GM12878 (cell line): ENCODE measurements at regions of chr7 and their contacts with region 1.

Region 1: DNA sequence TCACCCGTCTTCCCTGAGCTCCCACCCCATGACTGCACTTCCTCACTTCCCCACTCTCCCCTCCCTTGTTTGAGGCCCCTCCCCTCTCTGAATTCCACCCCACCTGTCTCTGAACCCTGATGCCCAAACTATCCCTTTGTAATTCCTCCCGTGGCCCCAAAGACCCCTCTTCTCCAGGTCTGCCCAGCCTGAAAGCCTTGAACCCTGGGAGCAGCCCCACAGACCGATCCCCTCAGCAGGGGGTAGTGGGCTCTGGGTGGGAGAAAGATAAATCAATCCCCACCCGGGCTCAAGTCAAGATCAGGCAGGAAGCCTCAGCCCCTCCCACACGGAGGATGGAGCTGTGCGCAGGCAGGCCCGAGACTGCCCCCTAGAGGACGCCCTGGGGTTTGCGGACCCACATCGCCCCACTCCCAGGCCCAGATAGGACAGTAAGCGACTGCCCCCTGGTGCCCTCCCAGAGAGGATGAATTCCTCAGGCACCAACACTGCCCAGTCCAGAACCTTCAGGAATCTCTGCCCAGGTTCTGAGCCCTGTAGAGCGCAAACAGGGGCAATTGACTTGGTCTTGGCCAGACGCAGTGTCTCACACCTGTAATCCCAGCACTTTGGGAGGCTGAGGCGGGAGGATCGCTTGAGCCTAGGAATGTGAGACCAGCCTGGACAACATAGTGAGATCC is 11.7 kb downstream of the HSPB1 start:
- DNase-seq: peak; percentile 71
- ATAC-seq: peak; percentile 58
- H3K4me3 ChIP-seq: no peak overlapping the region
- H3K27ac ChIP-seq: no peak overlapping the region; the same call in 1 of the 2 replicates
- H3K4me1 ChIP-seq: peaks cover 5% of the 10 kb centered on the region
- H3K27me3 ChIP-seq: no peaks in the 10 kb centered on the region
- CTCF ChIP-seq: peak; percentile 100; a peak in 5 of 6 replicates
- EP300 ChIP-seq: 0 out of 4 replicates have a peak, but pooled peaks of 1 of the 2 experiments have one; percentile 27
- POLR2A ChIP-seq: no peak
- RAD21 ChIP-seq: peak; percentile 99

Region 2: GRCh38 chr7:76077435-76077834 is 236.7 kb before region 1 on chr7:
- CTCF ChIA-PET with region 1: no interaction called
- POLR2A ChIA-PET with region 1: no interaction called
- RAD21 ChIA-PET with region 1: no interaction called
- SMC1A ChIA-PET with region 1: no interaction called
- in situ Hi-C with region 1: no loop called
- intact Hi-C with region 1: no loop called
- DNase-seq: no peak
- ATAC-seq: no peak
- H3K4me3 ChIP-seq: no peak overlapping the region
- H3K27ac ChIP-seq: no peak overlapping the region
- H3K4me1 ChIP-seq: no peaks in the 10 kb centered on the region
- H3K27me3 ChIP-seq: no peaks in the 10 kb centered on the region
- CTCF ChIP-seq: no peak
- EP300 ChIP-seq: no peak
- POLR2A ChIP-seq: no peak
- RAD21 ChIP-seq: no peak

Region 3: DNA sequence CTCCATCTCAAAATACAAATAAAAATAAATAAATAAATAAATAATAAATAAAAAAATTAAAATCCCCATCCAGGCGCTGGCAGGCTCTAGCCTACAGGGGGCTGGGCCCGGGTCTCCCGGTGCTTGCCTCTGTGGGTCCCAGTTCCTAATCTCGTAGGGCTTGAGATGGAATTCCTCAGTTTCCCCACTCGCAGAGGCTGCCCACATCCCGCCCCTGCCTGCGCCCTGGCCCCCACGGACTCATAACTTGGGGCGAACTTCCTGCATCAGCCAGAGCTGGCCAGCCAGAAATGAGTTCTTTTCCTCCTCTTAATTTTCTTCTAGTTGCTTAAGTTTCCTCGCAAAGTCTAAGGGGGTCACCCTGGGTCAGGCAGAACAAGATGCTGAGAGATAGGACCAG is 134.5 kb before region 1 on chr7:
- CTCF ChIA-PET with region 1: interaction called, 53 read pairs
- POLR2A ChIA-PET with region 1: no interaction called
- RAD21 ChIA-PET with region 1: interaction called, 18 read pairs
- SMC1A ChIA-PET with region 1: interaction called, 13 read pairs
- in situ Hi-C with region 1: loop called (anchors 5 kb)
- intact Hi-C with region 1: loop called (anchors 1 kb)
- DNase-seq: no peak
- ATAC-seq: no peak
- H3K4me3 ChIP-seq: no peak overlapping the region
- H3K27ac ChIP-seq: no peak overlapping the region
- H3K4me1 ChIP-seq: no peaks in the 10 kb centered on the region
- H3K27me3 ChIP-seq: no peaks in the 10 kb centered on the region
- CTCF ChIP-seq: no peak
- EP300 ChIP-seq: no peak
- POLR2A ChIP-seq: no peak
- RAD21 ChIP-seq: no peak

Region 4: DNA sequence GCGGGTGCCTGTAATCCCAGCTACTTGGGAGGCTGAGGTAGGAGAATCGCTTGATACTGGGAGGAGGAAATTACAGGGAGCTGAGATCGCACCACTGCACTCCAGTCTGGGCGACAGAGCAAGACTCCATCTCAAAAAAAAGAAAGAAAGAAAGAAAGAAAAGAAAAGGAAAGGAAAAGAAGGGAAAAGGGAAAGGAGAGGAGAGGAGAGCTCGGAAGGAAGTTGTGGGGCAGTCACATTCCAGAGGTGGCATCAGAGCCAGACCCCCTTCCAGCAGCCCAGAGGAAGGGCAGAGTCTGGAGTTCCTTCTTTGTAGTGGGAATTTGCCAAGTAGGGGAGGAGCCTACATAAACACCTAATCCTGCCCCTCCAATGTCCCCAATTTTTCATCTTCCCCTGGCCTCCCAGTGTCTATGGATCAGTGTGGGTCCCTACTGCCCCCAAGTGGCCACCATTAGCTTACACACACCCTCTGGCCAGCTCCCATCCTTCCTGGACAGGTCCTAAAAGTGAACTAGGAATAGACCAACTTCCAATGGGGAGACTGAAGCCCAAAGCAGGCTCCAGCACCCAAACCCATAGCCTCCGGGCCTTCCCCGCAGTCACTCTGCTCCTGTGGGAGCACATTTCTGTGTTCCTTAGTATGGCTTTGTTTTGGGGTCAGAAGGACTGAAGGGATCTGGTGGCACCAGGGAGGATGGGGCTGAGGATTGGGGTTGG is 51.3 kb before region 1 on chr7:
- CTCF ChIA-PET with region 1: interaction called, 16 read pairs
- POLR2A ChIA-PET with region 1: interaction called, 3 read pairs
- RAD21 ChIA-PET with region 1: interaction called, 4 read pairs
- SMC1A ChIA-PET with region 1: no interaction called
- in situ Hi-C with region 1: no loop called
- intact Hi-C with region 1: no loop called
- DNase-seq: no peak
- ATAC-seq: peak; percentile 85
- H3K4me3 ChIP-seq: no peak overlapping the region
- H3K27ac ChIP-seq: no peak overlapping the region
- H3K4me1 ChIP-seq: peaks cover 3% of the 10 kb centered on the region
- H3K27me3 ChIP-seq: no peaks in the 10 kb centered on the region; a peak in 1 of 4 replicates
- CTCF ChIP-seq: peak; percentile 76 to 79 (median 78)
- EP300 ChIP-seq: no peak
- POLR2A ChIP-seq: no peak
- RAD21 ChIP-seq: peak; percentile 73

Region 5: DNA sequence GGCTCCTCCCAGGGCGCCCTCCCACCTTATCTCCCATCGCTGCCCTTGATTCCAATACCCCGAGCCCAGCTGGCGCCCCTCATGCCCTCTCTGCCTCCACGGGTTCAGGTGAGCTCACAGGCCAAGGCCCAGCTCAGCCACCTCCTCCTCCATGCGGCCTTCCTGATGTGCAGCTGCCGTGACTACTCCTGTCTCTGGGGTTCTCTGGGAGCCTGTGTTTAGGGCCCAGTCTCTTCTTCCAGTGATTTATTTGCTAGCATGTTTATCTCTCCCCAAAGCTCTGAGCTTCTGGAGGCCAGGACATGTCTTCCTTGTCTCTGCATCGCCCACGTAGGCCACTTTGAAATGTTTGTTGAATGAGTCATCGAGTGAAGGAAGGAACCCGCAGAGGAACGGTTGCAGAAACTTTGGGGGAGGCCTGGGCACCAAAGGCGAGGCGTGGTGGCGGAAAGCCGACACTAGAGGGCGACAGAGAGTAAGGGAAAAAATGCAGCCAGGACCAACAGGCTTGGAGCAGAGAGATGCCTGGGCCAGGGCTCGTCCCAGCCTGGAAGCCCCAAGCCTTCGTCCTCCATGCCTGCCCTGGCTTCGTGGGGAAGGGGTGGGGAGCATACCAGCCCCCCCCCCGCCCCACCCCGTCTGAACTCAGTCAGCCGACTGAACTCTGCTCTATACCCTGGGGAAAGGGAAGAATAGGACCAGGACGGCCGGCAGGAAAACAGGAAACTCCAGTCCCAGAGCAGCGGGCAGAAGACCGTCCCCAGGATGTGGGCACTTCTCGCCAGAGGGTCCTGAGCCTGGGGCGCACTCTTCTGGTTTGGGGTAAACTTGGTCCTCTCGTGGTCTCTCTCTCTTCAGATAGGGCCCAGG is 22.6 kb before region 1 on chr7:
- CTCF ChIA-PET with region 1: interaction called, 229 read pairs
- POLR2A ChIA-PET with region 1: interaction called, 12 read pairs
- RAD21 ChIA-PET with region 1: interaction called, 86 read pairs
- SMC1A ChIA-PET with region 1: interaction called, 34 read pairs
- in situ Hi-C with region 1: no loop called
- intact Hi-C with region 1: loop called (anchors 1 kb)
- DNase-seq: peak; percentile 77
- ATAC-seq: peak; percentile 93
- H3K4me3 ChIP-seq: no peak overlapping the region
- H3K27ac ChIP-seq: peak overlapping the region; percentile 13
- H3K4me1 ChIP-seq: peaks cover 6% of the 10 kb centered on the region
- H3K27me3 ChIP-seq: no peaks in the 10 kb centered on the region
- CTCF ChIP-seq: peak; percentile 95 to 98 (median 98); a peak in 5 of 6 replicates
- EP300 ChIP-seq: 0 out of 4 replicates have a peak, but pooled peaks of 1 of the 2 experiments have one; percentile 16
- POLR2A ChIP-seq: no peak
- RAD21 ChIP-seq: peak; percentile 81

Region 6: DNA sequence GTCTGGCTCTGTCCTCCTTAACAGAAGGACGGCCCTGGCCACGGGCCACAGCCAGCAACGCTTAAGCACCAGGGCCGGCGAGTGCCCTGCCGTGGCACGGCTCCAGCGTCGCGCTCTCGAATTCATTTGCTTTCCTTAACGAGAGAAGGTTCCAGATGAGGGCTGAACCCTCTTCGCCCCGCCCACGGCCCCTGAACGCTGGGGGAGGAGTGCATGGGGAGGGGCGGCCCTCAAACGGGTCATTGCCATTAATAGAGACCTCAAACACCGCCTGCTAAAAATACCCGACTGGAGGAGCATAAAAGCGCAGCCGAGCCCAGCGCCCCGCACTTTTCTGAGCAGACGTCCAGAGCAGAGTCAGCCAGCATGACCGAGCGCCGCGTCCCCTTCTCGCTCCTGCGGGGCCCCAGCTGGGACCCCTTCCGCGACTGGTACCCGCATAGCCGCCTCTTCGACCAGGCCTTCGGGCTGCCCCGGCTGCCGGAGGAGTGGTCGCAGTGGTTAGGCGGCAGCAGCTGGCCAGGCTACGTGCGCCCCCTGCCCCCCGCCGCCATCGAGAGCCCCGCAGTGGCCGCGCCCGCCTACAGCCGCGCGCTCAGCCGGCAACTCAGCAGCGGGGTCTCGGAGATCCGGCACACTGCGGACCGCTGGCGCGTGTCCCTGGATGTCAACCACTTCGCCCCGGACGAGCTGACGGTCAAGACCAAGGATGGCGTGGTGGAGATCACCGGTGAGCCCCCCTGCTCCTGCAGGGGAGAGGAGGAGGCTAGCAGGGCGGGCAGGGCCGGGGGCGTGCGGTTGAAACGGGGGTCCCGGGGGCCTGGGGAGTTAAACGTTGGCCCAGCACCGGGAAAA is 11.6 kb before region 1 on chr7 and contains the start of gene HSPB1:
- CTCF ChIA-PET with region 1: interaction called, 229 read pairs
- POLR2A ChIA-PET with region 1: interaction called, 11 read pairs
- RAD21 ChIA-PET with region 1: interaction called, 9 read pairs
- SMC1A ChIA-PET with region 1: interaction called, 9 read pairs
- in situ Hi-C with region 1: no loop called
- intact Hi-C with region 1: no loop called
- DNase-seq: peak; percentile 60
- ATAC-seq: peak; percentile 84
- H3K4me3 ChIP-seq: peak within 1 kb of the TSS; percentile 95
- H3K27ac ChIP-seq: peak within 1 kb of the TSS; percentile 54; the same call in 1 of the 2 replicates
- H3K4me1 ChIP-seq: peaks cover 3% of the 10 kb centered on the region
- H3K27me3 ChIP-seq: no peaks in the 10 kb centered on the region
- CTCF ChIP-seq: no peak
- EP300 ChIP-seq: peak in 1 of 2 experiments; percentile 33; a peak in 1 of 4 replicates
- POLR2A ChIP-seq: peak; percentile 95
- RAD21 ChIP-seq: no peak
- polyA plus RNA-seq, gene HSPB1: 13.7 to 56.5 TPM

Region 7: DNA sequence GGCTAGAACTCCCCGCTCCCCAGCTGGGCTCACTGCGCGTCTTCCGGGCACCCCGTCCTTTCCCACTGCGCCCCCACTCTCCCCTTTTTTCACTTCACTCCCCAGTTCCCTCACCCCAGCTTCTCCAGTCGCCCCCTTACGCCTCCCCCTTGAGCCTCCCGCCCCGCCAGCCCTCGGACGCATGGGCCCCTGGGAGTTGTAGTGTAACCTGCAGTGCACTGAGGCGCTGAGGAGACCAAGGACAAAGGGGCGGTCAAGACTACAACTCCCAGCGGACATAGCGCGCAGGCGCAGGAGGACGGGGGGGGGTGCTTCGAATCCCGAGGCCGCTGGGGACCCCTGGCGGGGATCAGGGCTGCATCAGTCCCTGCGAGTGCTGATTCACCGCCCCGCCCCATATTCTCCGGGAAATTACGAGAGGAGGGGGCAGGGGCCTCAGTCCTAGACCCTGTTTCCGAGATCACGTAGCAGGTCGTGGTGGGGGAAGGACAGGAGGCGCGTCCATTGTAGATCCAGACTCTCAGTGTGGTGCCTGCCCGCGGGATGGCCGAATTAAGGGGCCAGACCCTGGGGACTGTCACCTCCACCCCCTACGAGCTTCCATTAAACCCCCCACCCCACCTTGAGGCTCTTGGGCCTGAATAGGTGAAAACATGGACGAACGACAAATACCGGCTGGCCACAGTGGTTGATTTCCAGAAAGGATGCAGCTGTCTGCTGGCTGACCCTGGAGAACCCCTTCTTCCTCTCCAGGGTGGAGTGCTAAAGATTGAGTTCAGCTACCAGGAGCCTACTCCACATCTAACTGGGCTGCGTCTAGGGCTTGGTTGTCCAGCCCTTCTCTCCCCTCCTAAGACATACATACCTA is 45.2 kb after region 1 on chr7:
- CTCF ChIA-PET with region 1: interaction called, 58 read pairs
- POLR2A ChIA-PET with region 1: interaction called, 67 read pairs
- RAD21 ChIA-PET with region 1: interaction called, 58 read pairs
- SMC1A ChIA-PET with region 1: interaction called, 29 read pairs
- in situ Hi-C with region 1: no loop called
- intact Hi-C with region 1: loop called (anchors 1 kb)
- DNase-seq: peak; percentile 85
- ATAC-seq: peak; percentile 95
- H3K4me3 ChIP-seq: peak overlapping the region; percentile 99
- H3K27ac ChIP-seq: peak overlapping the region; percentile 96
- H3K4me1 ChIP-seq: peaks cover 10% of the 10 kb centered on the region
- H3K27me3 ChIP-seq: no peaks in the 10 kb centered on the region
- CTCF ChIP-seq: peak; percentile 74 to 90 (median 80)
- EP300 ChIP-seq: no peak
- POLR2A ChIP-seq: no peak
- RAD21 ChIP-seq: peak; percentile 49; the same call in 1 of the 2 replicates

Region 8: DNA sequence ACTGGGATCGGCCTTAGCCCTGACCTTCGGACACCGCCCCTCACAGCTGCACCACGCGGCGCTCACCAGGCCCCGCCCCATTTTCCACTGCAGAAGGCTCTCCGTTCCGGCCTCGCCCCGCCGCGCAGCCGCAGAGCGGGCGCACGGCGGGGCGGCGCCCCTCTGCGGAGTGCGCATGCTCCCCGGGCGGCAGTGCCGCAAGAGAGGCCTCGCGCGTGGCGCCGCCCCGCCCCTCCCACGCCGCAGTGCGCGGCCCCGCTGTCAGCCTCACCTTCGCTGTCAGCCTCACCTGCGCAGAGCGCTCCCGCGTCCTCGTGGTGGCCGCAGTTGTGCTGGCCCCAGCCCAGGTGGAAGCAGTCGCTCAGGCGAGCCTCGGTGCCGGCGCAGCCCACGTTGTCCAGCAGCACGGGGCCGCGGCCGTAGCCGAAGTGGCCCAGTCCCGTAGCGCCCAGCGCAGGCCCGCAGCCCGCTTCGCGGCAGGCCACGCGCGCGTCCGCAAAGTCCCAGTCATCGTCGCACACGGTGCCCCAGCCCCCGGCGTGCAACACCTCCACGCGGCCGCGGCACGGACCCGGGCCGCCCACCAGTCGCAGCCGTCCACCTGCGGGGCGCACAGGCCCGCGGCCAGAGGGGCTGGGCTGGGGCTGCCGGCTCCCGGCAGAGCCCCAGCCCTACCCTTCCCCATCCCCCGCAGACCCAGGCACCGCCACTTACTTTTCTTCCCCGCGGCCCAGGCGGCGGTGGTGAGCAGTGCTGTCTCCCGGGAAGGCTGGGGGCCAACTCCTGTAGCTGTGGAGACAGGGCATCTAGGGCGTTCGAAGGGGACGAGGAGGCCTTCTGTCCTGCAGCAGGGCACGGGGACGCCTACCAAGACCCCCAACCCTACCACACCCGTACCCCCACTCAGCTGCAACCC is 79.2 kb after region 1 on chr7:
- CTCF ChIA-PET with region 1: no interaction called
- POLR2A ChIA-PET with region 1: no interaction called
- RAD21 ChIA-PET with region 1: no interaction called
- SMC1A ChIA-PET with region 1: no interaction called
- in situ Hi-C with region 1: no loop called
- intact Hi-C with region 1: loop called (anchors 2 kb)
- DNase-seq: peak; percentile 66
- ATAC-seq: peak; percentile 96
- H3K4me3 ChIP-seq: peak overlapping the region; percentile 67; the same call in 1 of the 2 replicates
- H3K27ac ChIP-seq: no peak overlapping the region
- H3K4me1 ChIP-seq: peaks cover 12% of the 10 kb centered on the region
- H3K27me3 ChIP-seq: no peaks in the 10 kb centered on the region
- CTCF ChIP-seq: no peak
- EP300 ChIP-seq: no peak
- POLR2A ChIP-seq: peak; percentile 93
- RAD21 ChIP-seq: no peak

Region 9: GRCh38 chr7:76424721-76425511 is 110.7 kb after region 1 on chr7 and contains the start of gene ZP3:
- CTCF ChIA-PET with region 1: no interaction called
- POLR2A ChIA-PET with region 1: no interaction called
- RAD21 ChIA-PET with region 1: no interaction called
- SMC1A ChIA-PET with region 1: no interaction called
- in situ Hi-C with region 1: no loop called
- intact Hi-C with region 1: no loop called
- DNase-seq: peak; percentile 40
- ATAC-seq: peak; percentile 89
- H3K4me3 ChIP-seq: no peak within 1 kb of the TSS
- H3K27ac ChIP-seq: no peak within 1 kb of the TSS
- H3K4me1 ChIP-seq: peaks cover 13% of the 10 kb centered on the region
- H3K27me3 ChIP-seq: no peaks in the 10 kb centered on the region
- CTCF ChIP-seq: no peak
- EP300 ChIP-seq: no peak
- POLR2A ChIP-seq: no peak
- RAD21 ChIP-seq: no peak
- polyA plus RNA-seq, gene ZP3: 2.0 to 5.1 TPM